ENCODE measurements at regions of chr6 and their contacts with region 1.

Region 1: DNA sequence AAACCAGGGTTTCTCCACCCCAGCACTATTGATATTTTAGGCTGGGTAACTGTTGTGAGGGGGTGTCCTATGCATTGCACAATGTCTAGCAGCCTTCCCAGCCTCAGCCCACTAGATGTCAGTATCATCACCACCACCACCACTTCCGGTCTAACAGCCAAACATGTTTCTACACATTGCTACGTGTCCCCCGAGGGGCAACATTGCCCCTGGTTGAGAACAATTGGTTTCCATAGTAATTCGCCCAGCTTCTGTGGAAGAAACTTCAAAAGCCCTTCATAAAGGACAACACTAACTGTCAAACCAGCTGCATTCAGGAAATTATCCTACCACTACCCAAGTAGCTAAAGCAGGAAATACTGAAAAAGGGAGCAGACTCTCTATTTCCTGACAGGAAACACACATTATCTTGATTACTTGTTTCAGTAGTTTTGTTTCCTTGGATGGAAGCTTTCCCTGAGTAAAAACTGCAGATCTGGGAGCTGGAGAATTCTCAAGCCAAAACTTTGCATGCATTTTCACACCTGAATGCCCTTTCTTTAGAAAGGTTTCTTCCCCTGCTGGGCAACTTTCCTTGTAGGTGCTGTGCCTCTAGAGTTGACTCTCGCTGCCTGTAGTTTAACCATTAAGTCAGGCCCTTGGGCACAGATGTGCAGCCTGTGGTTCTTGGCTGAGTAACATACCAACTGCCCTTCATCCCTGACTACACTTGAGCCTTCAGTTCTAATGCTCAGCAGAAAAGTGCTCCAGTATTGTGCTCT is 23.6 kb downstream of the PKHD1 start:
- DNase-seq: peak; percentile 85
- ATAC-seq: peak; percentile 99
- H3K4me3 Mint-ChIP-seq: peak overlapping the region; percentile 24
- H3K27ac Mint-ChIP-seq: peak overlapping the region; percentile 82
- H3K4me1 Mint-ChIP-seq: peaks cover 13% of the 10 kb centered on the region
- H3K27me3 Mint-ChIP-seq: peaks cover 2% of the 10 kb centered on the region
- CTCF ChIP-seq: peak; percentile 61

Region 2: DNA sequence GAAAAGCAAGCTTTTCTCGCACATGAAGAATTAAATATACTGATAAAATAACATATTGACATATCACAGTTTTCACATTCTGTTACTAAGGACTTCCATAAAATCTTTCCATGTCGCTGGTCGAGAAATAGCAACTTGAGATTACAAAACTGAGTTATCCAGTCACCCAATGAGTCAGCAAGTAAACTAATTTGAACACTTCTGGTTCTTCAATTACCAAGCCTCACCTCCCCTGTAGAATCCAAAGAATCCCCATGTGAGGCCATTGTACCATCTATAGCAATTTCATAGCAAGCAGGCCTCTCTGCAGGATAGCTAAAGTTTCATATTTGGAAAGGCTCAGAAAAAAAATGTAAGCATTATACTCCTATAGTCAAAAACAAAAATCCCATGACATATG is 63.7 kb before region 1 on chr6:
- CTCF ChIA-PET with region 1: no interaction called
- POLR2A ChIA-PET with region 1: no interaction called
- intact Hi-C with region 1: no loop called
- DNase-seq: no peak
- ATAC-seq: no peak
- H3K4me3 Mint-ChIP-seq: no peak overlapping the region
- H3K27ac Mint-ChIP-seq: no peak overlapping the region
- H3K4me1 Mint-ChIP-seq: no peaks in the 10 kb centered on the region
- H3K27me3 Mint-ChIP-seq: peaks cover 10% of the 10 kb centered on the region
- CTCF ChIP-seq: no peak

Region 3: GRCh38 chr6:52049252-52050050 is 14.3 kb before region 1 on chr6:
- CTCF ChIA-PET with region 1: interaction called, 59 read pairs
- POLR2A ChIA-PET with region 1: no interaction called
- intact Hi-C with region 1: no loop called
- DNase-seq: no peak
- ATAC-seq: peak; percentile 30
- H3K4me3 Mint-ChIP-seq: no peak overlapping the region
- H3K27ac Mint-ChIP-seq: no peak overlapping the region
- H3K4me1 Mint-ChIP-seq: no peaks in the 10 kb centered on the region
- H3K27me3 Mint-ChIP-seq: peaks cover 18% of the 10 kb centered on the region
- CTCF ChIP-seq: peak; percentile 66

Region 4: GRCh38 chr6:52074155-52074554 is 10.4 kb after region 1 on chr6:
- CTCF ChIA-PET with region 1: interaction called, 12 read pairs
- POLR2A ChIA-PET with region 1: no interaction called
- intact Hi-C with region 1: no loop called
- DNase-seq: no peak
- ATAC-seq: no peak
- H3K4me3 Mint-ChIP-seq: no peak overlapping the region
- H3K27ac Mint-ChIP-seq: no peak overlapping the region
- H3K4me1 Mint-ChIP-seq: no peaks in the 10 kb centered on the region
- H3K27me3 Mint-ChIP-seq: peaks cover 24% of the 10 kb centered on the region
- CTCF ChIP-seq: no peak

Measured in activated CD8-positive, alpha-beta T cell treated with anti-CD3 and anti-CD28 coated beads for 36 hours (primary cell).